ENCODE measurements at regions of chr16 and their contacts with region 1.

Region 1: DNA sequence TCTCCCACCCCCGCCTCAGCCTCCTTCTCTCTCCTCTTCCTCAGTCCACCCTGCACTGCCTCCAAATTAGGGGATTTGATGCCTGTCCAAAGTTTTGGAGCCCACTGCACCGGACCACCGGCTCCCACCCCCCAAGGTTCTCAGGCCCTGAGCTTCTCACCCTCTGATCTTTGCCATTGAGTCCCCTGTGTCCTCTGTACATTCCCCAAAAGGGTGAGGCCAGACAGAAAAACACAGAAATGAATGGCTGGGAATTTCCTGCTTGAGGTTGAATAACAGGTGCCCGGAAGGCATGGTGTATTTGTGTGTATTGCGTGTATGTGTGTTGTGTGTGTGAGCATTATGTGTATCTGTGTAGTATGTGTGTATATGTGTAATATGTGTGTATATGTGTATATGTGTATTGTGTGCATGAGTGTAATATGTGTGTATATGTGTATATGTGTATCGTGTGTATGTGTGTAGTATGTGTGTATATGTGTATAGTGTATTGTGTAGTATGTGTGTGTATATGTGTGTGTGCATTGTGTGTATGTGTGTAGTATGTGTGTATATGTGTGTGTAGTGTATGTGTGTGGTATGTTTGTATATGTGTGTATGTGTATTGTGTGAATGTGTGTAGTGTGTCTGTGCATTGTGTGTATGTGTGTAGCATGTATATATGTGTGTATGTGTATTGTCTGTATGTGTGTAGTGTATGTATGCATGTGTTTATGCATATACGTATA is 16.0 kb upstream of the CCL17 start:
- DNase-seq: no peak
- ATAC-seq: no peak
- H3K4me3 ChIP-seq: no peak overlapping the region
- H3K4me3 Mint-ChIP-seq: no peak overlapping the region
- H3K27ac ChIP-seq: no peak overlapping the region
- H3K27ac Mint-ChIP-seq: no peak overlapping the region
- H3K4me1 ChIP-seq: no peaks in the 10 kb centered on the region
- H3K4me1 Mint-ChIP-seq: no peaks in the 10 kb centered on the region
- H3K27me3 ChIP-seq: peaks cover 0 to 2% of the 10 kb centered on the region in 2 experiments
- H3K27me3 Mint-ChIP-seq: no peaks in the 10 kb centered on the region
- CTCF ChIP-seq: no peak

Region 2: GRCh38 chr16:57372372-57373116 is 16.0 kb before region 1 on chr16 and contains the start of gene CX3CL1:
- CTCF ChIA-PET with region 1: no interaction called
- POLR2A ChIA-PET with region 1: no interaction called
- intact Hi-C with region 1: loop called in 1 of 2 experiments (anchors 2 kb)
- DNase-seq: no peak
- ATAC-seq: no peak
- H3K4me3 ChIP-seq: no peak within 1 kb of the TSS
- H3K4me3 Mint-ChIP-seq: no peak within 1 kb of the TSS
- H3K27ac ChIP-seq: no peak within 1 kb of the TSS
- H3K27ac Mint-ChIP-seq: no peak within 1 kb of the TSS
- H3K4me1 ChIP-seq: no peaks in the 10 kb centered on the region
- H3K4me1 Mint-ChIP-seq: no peaks in the 10 kb centered on the region
- H3K27me3 ChIP-seq: no peaks in the 10 kb centered on the region
- H3K27me3 Mint-ChIP-seq: no peaks in the 10 kb centered on the region
- CTCF ChIP-seq: no peak
- total RNA-seq, gene CX3CL1: not detected

Region 3: GRCh38 chr16:57544119-57544653 is 155.7 kb after region 1 on chr16:
- CTCF ChIA-PET with region 1: no interaction called
- POLR2A ChIA-PET with region 1: no interaction called
- intact Hi-C with region 1: no loop called
- DNase-seq: peak in 3 of 14 experiments; percentile 47 to 69 (median 65)
- ATAC-seq: peak; percentile 24
- H3K4me3 ChIP-seq: peak overlapping the region; percentile 60
- H3K4me3 Mint-ChIP-seq: peak overlapping the region; percentile 21
- H3K27ac ChIP-seq: no peak overlapping the region
- H3K27ac Mint-ChIP-seq: no peak overlapping the region
- H3K4me1 ChIP-seq: peaks cover 49% of the 10 kb centered on the region
- H3K4me1 Mint-ChIP-seq: peaks cover 45% of the 10 kb centered on the region
- H3K27me3 ChIP-seq: no peaks in the 10 kb centered on the region
- H3K27me3 Mint-ChIP-seq: no peaks in the 10 kb centered on the region
- CTCF ChIP-seq: no peak